ENCODE measurements at regions of chr18 and their contacts with region 1.

Region 1: DNA sequence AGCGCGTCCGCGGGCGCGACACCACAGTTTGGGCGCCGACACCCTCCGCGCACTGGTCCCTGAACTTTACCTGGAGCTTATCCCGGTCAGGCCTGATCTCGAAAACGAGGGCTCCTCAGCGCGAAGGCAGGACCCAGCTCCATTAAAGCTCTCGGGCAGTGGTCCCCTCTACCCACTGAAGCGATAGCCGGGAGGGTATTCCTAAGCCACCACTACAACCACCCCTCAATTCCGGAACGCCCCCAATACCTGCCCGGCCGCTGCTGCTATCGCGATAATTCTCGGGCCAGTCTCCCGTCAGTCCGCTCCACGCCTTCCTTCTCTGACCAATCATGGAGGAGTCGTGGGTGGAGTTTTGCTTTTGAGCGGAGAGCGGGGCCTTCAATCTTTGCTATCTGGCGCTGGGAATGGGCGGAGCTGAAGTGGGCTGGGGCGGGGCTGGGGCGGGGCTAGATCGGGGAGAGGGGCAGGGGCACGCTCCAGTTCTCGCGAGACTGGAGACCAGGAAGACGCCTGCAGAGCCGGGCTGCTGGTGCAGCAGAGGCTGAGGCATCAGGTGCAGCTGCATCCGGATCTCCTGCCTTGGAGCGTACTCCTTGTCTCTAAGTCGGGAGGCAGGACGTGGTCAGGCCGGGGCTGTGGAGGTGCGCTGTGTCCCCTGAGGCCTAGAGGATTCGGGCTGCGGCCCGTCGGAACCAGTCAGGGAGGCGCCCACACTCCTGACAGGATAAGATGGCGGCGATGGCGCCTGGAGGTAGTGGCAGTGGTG is at the starts of genes PIGN and RELCH:
- DNase-seq: peak; percentile 97 to 98
- H3K4me3 ChIP-seq: peak within 1 kb of the TSS; percentile 81 to 91
- H3K27ac ChIP-seq: peak within 1 kb of the TSS; percentile 83 to 89
- H3K4me1 ChIP-seq: peaks cover 0 to 48% (median 28%) of the 10 kb centered on the region in 4 donors
- H3K27me3 ChIP-seq: no peaks in the 10 kb centered on the region
- CTCF ChIP-seq: peak in 1 of 2 experiments; percentile 13

Region 2: GRCh38 chr18:62249478-62250097 is 62.6 kb after region 1 on chr18:
- intact Hi-C with region 1: loop called (anchors 5 kb)
- DNase-seq: peak; percentile 72 to 82
- H3K4me3 ChIP-seq: no peak overlapping the region
- H3K27ac ChIP-seq: no peak overlapping the region
- H3K4me1 ChIP-seq: peaks cover 0 to 24% (median 2%) of the 10 kb centered on the region in 4 donors
- H3K27me3 ChIP-seq: no peaks in the 10 kb centered on the region
- CTCF ChIP-seq: peak; percentile 63 to 70

Region 3: GRCh38 chr18:63410792-63411191 is 1223.8 kb after region 1 on chr18:
- intact Hi-C with region 1: loop called (anchors 10 kb)
- DNase-seq: no peak
- H3K4me3 ChIP-seq: no peak overlapping the region
- H3K27ac ChIP-seq: no peak overlapping the region
- H3K4me1 ChIP-seq: peaks cover 0 to 4% (median 0%) of the 10 kb centered on the region in 4 donors
- H3K27me3 ChIP-seq: no peaks in the 10 kb centered on the region
- CTCF ChIP-seq: no peak